CD8-positive, alpha-beta T cell (primary cell): ENCODE measurements at regions of chr9 and their contacts with region 1.

Region 1: DNA sequence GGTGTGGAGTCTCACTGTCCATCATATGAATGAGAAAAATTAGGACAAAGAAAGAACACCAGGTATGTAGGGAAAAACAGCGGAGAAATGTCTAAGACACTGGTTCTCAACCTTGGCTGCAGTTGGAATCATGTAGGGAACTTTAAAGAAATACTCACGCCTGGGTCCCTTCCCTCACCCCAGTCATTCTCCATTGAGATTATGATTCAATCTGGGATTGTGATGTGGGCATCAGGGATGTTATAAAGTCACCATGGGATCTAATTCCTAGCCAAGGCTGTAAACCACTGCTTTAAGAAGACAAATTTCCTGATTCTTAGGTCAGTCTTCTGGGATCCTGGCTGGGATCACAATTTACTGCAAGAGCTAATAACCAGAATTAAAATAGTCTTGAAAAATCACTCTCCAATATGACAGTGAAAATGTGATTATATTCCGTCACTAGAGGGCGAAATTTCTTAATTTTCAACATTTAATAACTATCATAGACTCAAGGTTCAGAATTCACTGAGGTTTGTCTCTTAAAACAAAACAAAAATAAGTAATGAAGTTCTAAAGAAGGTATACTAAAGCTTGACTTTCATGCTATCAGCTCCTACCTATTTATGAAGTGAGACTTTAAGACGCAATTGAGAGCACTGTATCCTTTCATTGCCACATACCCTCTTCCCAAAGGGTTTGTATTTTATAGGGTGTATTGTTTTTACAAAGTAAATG is 60.5 kb downstream of the GLDC start:
- DNase-seq: peak in 2 of 9 experiments; percentile 41 to 51
- ATAC-seq: no peak
- H3K4me3 ChIP-seq: no peak overlapping the region
- H3K4me3 Mint-ChIP-seq: no peak overlapping the region
- H3K27ac ChIP-seq: no peak overlapping the region
- H3K27ac Mint-ChIP-seq: no peak overlapping the region
- H3K4me1 ChIP-seq: no peaks in the 10 kb centered on the region
- H3K4me1 Mint-ChIP-seq: no peaks in the 10 kb centered on the region
- H3K27me3 ChIP-seq: no peaks in the 10 kb centered on the region
- H3K27me3 Mint-ChIP-seq: peaks cover 4% of the 10 kb centered on the region
- CTCF ChIP-seq: peak; percentile 64

Region 2: DNA sequence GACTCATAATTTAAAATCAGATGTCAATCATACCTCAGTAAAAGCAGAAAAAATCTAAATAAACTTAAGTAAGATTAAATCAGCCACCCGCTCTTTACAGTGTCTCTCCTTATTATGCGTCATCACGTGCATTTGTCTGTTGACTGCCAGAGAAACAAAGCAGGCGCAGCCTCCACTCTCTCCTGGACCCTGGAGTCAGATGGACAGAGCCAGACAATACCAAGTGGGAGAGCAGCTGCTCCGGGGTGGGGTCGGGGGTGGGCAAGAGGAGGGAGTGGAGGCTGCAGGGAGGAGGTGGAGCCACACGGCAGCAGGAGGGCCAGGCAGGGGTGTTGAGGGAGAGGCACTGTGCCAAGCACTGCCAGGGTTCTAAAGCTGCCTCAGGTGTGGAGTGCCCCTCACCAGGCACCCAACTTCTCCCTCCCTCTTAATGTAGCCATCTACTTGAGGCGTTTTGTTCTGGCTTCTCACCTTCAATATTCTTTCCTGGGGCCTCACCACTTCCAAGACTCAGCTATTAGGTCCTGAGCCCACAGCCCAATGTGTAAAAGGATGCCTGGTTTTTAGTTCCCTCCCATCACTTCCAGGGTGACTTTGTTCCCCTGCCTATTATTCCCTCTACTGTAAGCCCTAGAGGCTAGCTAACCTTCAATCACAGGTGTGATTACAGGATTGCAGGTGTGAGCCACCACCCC is 35.8 kb before region 1 on chr9:
- CTCF ChIA-PET with region 1: no interaction called
- POLR2A ChIA-PET with region 1: no interaction called
- intact Hi-C with region 1: no loop called
- DNase-seq: no peak
- ATAC-seq: no peak
- H3K4me3 ChIP-seq: no peak overlapping the region
- H3K4me3 Mint-ChIP-seq: no peak overlapping the region
- H3K27ac ChIP-seq: no peak overlapping the region
- H3K27ac Mint-ChIP-seq: no peak overlapping the region
- H3K4me1 ChIP-seq: no peaks in the 10 kb centered on the region
- H3K4me1 Mint-ChIP-seq: no peaks in the 10 kb centered on the region
- H3K27me3 ChIP-seq: no peaks in the 10 kb centered on the region
- H3K27me3 Mint-ChIP-seq: peaks cover 2% of the 10 kb centered on the region
- CTCF ChIP-seq: no peak

Region 3: GRCh38 chr9:6667633-6668280 is 82.7 kb after region 1 on chr9:
- CTCF ChIA-PET with region 1: interaction called, 6 read pairs
- POLR2A ChIA-PET with region 1: no interaction called
- intact Hi-C with region 1: loop called (anchors 1 to 5 kb)
- DNase-seq: peak in 2 of 9 experiments; percentile 40 to 55
- ATAC-seq: no peak
- H3K4me3 ChIP-seq: no peak overlapping the region
- H3K4me3 Mint-ChIP-seq: no peak overlapping the region
- H3K27ac ChIP-seq: no peak overlapping the region
- H3K27ac Mint-ChIP-seq: no peak overlapping the region
- H3K4me1 ChIP-seq: no peaks in the 10 kb centered on the region
- H3K4me1 Mint-ChIP-seq: no peaks in the 10 kb centered on the region
- H3K27me3 ChIP-seq: no peaks in the 10 kb centered on the region
- H3K27me3 Mint-ChIP-seq: no peaks in the 10 kb centered on the region
- CTCF ChIP-seq: peak; percentile 53

Region 4: DNA sequence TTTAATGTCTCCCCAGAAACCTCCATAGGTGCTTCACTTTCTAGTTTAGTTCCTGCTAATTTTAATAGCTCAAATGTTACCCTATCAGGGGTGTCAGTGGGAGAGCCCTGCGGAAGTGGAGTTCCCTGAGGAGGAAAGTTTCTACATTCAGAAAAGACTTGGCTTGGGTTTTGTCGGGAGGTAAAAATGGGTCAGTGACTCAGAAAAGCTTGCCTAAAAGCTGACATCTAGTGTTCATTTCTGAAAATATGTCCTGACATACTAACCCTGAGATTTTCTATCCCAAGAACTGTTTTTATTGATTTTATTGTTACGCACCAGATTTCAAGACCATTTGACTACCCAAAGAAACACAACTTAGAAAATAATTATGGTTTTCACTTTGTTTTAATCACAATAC is 101.4 kb after region 1 on chr9:
- CTCF ChIA-PET with region 1: interaction called, 5 read pairs
- POLR2A ChIA-PET with region 1: no interaction called
- intact Hi-C with region 1: loop called (anchors 1 to 5 kb)
- DNase-seq: no peak
- ATAC-seq: no peak
- H3K4me3 ChIP-seq: no peak overlapping the region
- H3K4me3 Mint-ChIP-seq: no peak overlapping the region
- H3K27ac ChIP-seq: no peak overlapping the region
- H3K27ac Mint-ChIP-seq: no peak overlapping the region
- H3K4me1 ChIP-seq: peaks cover 5% of the 10 kb centered on the region
- H3K4me1 Mint-ChIP-seq: peaks cover 16% of the 10 kb centered on the region
- H3K27me3 ChIP-seq: no peaks in the 10 kb centered on the region
- H3K27me3 Mint-ChIP-seq: no peaks in the 10 kb centered on the region
- CTCF ChIP-seq: no peak

Region 5: DNA sequence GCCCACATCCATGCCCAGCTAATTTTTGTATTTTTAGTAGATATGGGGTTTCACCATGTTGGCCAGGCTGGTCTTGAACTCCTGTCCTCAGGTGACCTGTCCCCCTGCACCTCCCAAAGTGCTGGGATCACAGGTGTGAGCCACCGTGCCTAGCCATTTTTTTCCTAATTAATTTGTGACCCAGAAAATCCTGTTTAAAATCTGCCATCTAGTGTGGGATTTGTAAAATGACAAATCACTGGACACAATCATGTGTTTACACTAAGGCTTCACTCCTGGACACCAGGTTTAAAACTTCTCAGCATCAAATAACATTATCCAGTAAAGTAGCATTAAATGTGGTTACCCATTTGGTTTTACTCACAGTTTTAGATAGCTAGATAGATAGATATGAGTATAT is 154.2 kb after region 1 on chr9:
- CTCF ChIA-PET with region 1: interaction called, 4 read pairs
- POLR2A ChIA-PET with region 1: no interaction called
- intact Hi-C with region 1: loop called (anchors 1 to 10 kb)
- DNase-seq: no peak
- ATAC-seq: no peak
- H3K4me3 ChIP-seq: no peak overlapping the region
- H3K4me3 Mint-ChIP-seq: no peak overlapping the region
- H3K27ac ChIP-seq: no peak overlapping the region
- H3K27ac Mint-ChIP-seq: no peak overlapping the region
- H3K4me1 ChIP-seq: no peaks in the 10 kb centered on the region
- H3K4me1 Mint-ChIP-seq: no peaks in the 10 kb centered on the region
- H3K27me3 ChIP-seq: no peaks in the 10 kb centered on the region
- H3K27me3 Mint-ChIP-seq: peaks cover 2% of the 10 kb centered on the region
- CTCF ChIP-seq: no peak

Region 6: GRCh38 chr9:6788162-6789016 is 203.3 kb after region 1 on chr9:
- CTCF ChIA-PET with region 1: no interaction called
- POLR2A ChIA-PET with region 1: no interaction called
- intact Hi-C with region 1: loop called in 1 of 2 experiments (anchors 10 kb)
- DNase-seq: no peak
- ATAC-seq: no peak
- H3K4me3 ChIP-seq: no peak overlapping the region
- H3K4me3 Mint-ChIP-seq: no peak overlapping the region
- H3K27ac ChIP-seq: no peak overlapping the region
- H3K27ac Mint-ChIP-seq: peak overlapping the region; percentile 72
- H3K4me1 ChIP-seq: peaks cover 26% of the 10 kb centered on the region
- H3K4me1 Mint-ChIP-seq: peaks cover 59% of the 10 kb centered on the region
- H3K27me3 ChIP-seq: no peaks in the 10 kb centered on the region
- H3K27me3 Mint-ChIP-seq: no peaks in the 10 kb centered on the region
- CTCF ChIP-seq: no peak

Region 7: GRCh38 chr9:7011395-7012067 is 426.5 kb after region 1 on chr9:
- CTCF ChIA-PET with region 1: no interaction called
- POLR2A ChIA-PET with region 1: no interaction called
- intact Hi-C with region 1: loop called in 1 of 2 experiments (anchors 10 kb)
- DNase-seq: peak in 2 of 9 experiments; percentile 12 to 40
- ATAC-seq: peak; percentile 65
- H3K4me3 ChIP-seq: no peak overlapping the region
- H3K4me3 Mint-ChIP-seq: no peak overlapping the region
- H3K27ac ChIP-seq: no peak overlapping the region
- H3K27ac Mint-ChIP-seq: peak overlapping the region; percentile 33
- H3K4me1 ChIP-seq: peaks cover 7% of the 10 kb centered on the region
- H3K4me1 Mint-ChIP-seq: peaks cover 15% of the 10 kb centered on the region
- H3K27me3 ChIP-seq: no peaks in the 10 kb centered on the region
- H3K27me3 Mint-ChIP-seq: no peaks in the 10 kb centered on the region
- CTCF ChIP-seq: no peak

Region 8: GRCh38 chr9:7536310-7536939 is 951.4 kb after region 1 on chr9:
- CTCF ChIA-PET with region 1: no interaction called
- POLR2A ChIA-PET with region 1: no interaction called
- intact Hi-C with region 1: loop called in 1 of 2 experiments (anchors 5 kb)
- DNase-seq: peak in 4 of 9 experiments; percentile 11 to 43 (median 17)
- ATAC-seq: no peak
- H3K4me3 ChIP-seq: no peak overlapping the region
- H3K4me3 Mint-ChIP-seq: no peak overlapping the region
- H3K27ac ChIP-seq: no peak overlapping the region
- H3K27ac Mint-ChIP-seq: no peak overlapping the region
- H3K4me1 ChIP-seq: no peaks in the 10 kb centered on the region
- H3K4me1 Mint-ChIP-seq: no peaks in the 10 kb centered on the region
- H3K27me3 ChIP-seq: no peaks in the 10 kb centered on the region
- H3K27me3 Mint-ChIP-seq: peaks cover 13% of the 10 kb centered on the region
- CTCF ChIP-seq: no peak